ENCODE measurements at regions of chr1 and their contacts with region 1.

Region 1: DNA sequence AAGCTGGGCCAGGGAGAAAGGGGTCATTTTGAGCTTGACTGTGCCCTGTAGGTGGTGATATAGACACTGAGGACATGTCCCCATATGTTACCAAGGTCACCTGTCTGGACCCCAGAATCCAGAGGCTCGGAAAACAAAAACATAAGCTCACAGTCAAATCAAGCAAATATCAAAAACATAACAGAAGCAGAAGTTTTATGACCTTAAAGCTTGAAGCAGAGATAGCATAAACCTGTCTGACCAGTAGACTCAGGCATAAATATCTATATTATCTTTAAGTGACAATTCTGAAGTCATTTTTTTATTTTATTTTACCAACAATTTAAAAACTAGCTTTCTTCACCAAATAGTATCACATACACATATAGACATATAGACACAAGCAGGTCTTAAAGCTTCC is 32.8 kb upstream of the RHOU start:
- DNase-seq: no peak
- H3K4me3 ChIP-seq: no peak overlapping the region
- H3K27ac ChIP-seq: no peak overlapping the region
- H3K4me1 ChIP-seq: peaks cover 0 to 2% (median under 1%) of the 10 kb centered on the region in 4 experiments
- H3K27me3 ChIP-seq: no peaks in the 10 kb centered on the region

Region 2: DNA sequence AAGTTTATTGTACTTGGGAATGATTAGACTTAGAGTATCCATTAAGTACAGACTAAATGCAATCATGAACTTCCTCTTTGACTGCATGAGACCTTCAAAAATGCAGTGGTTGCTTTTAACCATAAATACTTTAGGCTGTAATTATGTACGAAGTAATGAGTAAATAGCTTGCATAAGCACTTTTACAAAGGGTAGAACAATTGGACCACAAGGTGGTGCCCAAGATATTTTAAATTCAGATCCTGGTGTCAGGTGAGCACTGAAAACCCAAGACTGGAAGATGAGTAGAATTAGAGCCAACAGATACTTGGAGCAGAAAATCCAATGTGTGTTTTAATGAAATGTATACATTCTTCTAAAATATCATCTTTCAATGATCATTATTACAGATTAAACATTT is 10.5 kb before region 1 on chr1:
- CTCF ChIA-PET with region 1: interaction called, 10 read pairs
- POLR2A ChIA-PET with region 1: no interaction called
- DNase-seq: peak; percentile 68 to 79 (median 78)
- H3K4me3 ChIP-seq: no peak overlapping the region
- H3K27ac ChIP-seq: no peak overlapping the region
- H3K4me1 ChIP-seq: peaks cover 0 to 2% (median 0%) of the 10 kb centered on the region in 4 experiments
- H3K27me3 ChIP-seq: peaks cover 0 to 6% (median 0%) of the 10 kb centered on the region in 5 experiments

Region 3: DNA sequence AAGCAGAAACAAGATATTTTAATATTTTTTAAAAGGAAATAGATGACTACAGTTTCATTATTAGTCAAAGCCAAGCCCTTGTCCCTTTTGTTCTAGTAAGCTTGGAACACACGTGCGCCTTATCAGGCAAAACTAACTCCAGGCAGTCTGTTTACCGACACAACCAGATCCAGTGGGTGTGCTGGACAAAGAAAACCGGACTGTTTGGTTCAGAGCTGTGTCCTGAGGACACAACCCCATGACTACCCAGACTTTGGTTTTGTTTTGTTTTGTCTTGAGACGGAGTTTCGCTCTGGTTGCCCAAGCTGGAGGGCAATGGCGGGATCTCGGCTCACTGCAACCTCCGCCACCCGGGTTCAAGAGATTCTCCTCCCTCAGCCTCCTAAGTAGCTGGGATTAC is 19.0 kb after region 1 on chr1:
- CTCF ChIA-PET with region 1: no interaction called
- POLR2A ChIA-PET with region 1: no interaction called
- DNase-seq: no peak
- H3K4me3 ChIP-seq: no peak overlapping the region
- H3K27ac ChIP-seq: no peak overlapping the region
- H3K4me1 ChIP-seq: no peaks in the 10 kb centered on the region
- H3K27me3 ChIP-seq: peaks cover 0 to 4% (median 0%) of the 10 kb centered on the region in 5 experiments